CD14-positive monocyte (primary cell): ENCODE measurements at regions of chr21 and their contacts with region 1.

Region 1: DNA sequence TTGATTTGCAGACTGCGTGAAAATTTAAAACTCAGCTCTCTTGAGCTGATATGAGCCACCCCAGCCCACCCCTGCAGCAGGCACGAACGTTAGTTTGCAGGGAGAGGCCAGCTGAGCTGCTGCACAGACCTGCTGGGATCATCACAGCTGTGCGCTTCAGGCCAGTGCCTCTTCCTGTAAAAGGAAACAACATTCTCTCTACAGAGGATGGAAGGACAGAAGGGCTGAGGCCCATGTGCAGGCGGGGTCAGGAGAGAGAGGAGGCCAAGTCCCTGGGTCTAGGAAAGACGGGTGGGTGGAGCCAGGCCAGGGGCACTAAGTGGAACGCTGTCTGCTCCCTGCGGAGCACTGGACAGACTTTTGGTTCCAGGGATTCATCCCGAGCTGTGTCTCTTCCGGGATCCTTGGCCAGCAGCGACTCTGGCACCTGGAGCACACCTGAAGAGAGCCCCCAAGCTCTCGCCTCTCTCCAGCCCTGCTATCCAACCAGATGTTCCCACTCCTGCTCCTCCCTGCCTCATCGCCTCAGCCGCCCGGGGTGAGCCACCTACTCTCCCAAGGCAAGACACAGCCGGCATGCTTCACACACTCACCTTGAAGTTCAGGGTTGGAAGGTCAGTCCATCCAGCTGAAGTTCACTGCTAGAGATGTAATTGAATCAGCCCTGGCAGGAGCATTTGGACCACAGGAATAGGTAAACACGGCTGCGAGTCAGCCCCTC is 42.4 kb downstream of the RSPH1 start:
- DNase-seq: no peak
- H3K4me3 ChIP-seq: no peak overlapping the region
- H3K4me3 Mint-ChIP-seq: peak overlapping the region in 1 of 2 donors; percentile 24
- H3K27ac ChIP-seq: no peak overlapping the region
- H3K27ac Mint-ChIP-seq: no peak overlapping the region
- H3K4me1 ChIP-seq: peaks cover 6 to 8% of the 10 kb centered on the region in 2 donors
- H3K4me1 Mint-ChIP-seq: peaks cover 7% of the 10 kb centered on the region
- H3K27me3 ChIP-seq: no peaks in the 10 kb centered on the region
- H3K27me3 Mint-ChIP-seq: peaks cover 0 to 9% (median 5%) of the 10 kb centered on the region in 3 donors
- CTCF ChIP-seq: no peak

Region 2: DNA sequence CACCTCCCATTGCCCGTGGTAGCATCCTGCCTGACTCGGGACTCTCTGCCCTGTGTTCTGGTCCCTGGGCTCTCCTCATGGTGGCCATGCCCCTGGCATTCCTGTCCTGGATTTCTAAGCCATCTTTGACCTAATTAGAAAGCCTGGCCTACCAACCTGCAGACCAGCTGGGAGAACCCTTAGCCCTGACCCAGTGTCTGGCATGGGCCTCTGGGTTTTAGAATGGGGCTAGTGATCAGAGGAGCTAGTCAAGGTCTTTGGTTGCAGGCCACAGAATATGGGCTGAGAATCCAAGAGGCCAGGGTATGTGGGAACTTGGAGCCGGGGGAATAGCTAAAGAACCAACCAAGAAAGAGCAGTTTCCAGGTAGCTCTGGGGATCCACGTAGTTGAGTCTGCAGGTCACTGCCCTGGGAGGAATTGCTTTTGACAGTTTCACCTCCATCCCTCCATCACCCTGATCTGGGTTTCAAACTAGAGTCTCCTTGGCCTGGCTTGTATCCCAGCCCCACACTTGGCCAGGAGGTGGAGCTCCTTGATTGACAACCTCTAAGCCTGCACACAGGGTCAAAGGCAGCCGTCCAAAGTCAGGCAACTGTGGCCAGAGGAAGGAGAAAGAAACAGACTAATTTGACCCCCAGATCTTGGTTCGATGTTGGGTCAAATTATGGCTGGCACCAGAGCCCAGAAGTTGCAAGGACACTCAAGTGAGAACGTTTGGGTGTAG is 289.4 kb before region 1 on chr21:
- intact Hi-C with region 1: loop called in 1 of 2 experiments (anchors 5 kb)
- DNase-seq: peak; percentile 64 to 71 (median 67)
- H3K4me3 ChIP-seq: no peak overlapping the region
- H3K4me3 Mint-ChIP-seq: peak overlapping the region in 1 of 2 donors; percentile 48
- H3K27ac ChIP-seq: no peak overlapping the region
- H3K27ac Mint-ChIP-seq: peak overlapping the region in 2 of 7 donors; percentile 60 to 80
- H3K4me1 ChIP-seq: no peaks in the 10 kb centered on the region
- H3K4me1 Mint-ChIP-seq: peaks cover 12% of the 10 kb centered on the region
- H3K27me3 ChIP-seq: peaks cover 0 to 6% of the 10 kb centered on the region in 2 donors
- H3K27me3 Mint-ChIP-seq: peaks cover 5 to 11% (median 8%) of the 10 kb centered on the region in 3 donors
- CTCF ChIP-seq: peak; percentile 73

Region 3: GRCh38 chr21:42337830-42338728 is 115.6 kb before region 1 on chr21:
- intact Hi-C with region 1: loop called (anchors 1 to 5 kb)
- DNase-seq: peak; percentile 63 to 82 (median 70)
- H3K4me3 ChIP-seq: no peak overlapping the region
- H3K4me3 Mint-ChIP-seq: peak overlapping the region in 1 of 2 donors; percentile 7
- H3K27ac ChIP-seq: no peak overlapping the region
- H3K27ac Mint-ChIP-seq: peak overlapping the region in 1 of 7 donors; percentile 78
- H3K4me1 ChIP-seq: peaks cover 6 to 7% of the 10 kb centered on the region in 2 donors
- H3K4me1 Mint-ChIP-seq: peaks cover 9% of the 10 kb centered on the region
- H3K27me3 ChIP-seq: peaks cover 0 to 5% of the 10 kb centered on the region in 2 donors
- H3K27me3 Mint-ChIP-seq: peaks cover 2 to 6% (median 4%) of the 10 kb centered on the region in 3 donors
- CTCF ChIP-seq: peak; percentile 82

Region 4: DNA sequence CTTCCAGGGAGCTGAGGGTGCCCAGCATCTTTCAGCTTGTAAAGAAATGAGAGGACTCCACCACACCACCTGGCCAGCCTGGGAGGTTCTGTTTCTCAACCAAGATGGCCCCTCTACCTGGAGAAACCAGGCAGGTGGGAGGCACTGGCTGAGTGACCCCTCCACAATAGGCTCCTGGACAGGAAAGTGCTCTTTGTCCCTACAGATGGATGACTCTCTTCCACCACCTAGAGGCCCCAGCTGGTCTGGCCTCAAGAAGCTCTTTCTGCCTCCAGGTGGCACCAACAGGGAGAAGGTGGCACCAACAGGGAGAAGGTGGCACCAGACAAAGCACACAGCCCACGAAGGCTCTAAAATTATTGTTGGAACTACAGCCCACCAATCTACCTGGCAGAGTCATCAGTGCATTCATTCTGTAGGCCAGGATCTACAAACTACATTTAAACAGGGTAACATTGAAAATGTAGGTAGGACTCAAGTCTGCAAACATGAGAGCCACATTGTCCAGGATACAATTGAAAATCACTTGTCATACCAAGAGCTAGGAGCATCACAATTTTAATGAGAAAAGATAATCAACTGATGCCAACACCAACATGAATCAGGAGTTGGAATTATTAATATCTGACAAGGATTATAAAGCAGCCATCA is 72.2 kb before region 1 on chr21:
- intact Hi-C with region 1: loop called in 1 of 2 experiments (anchors 5 kb)
- DNase-seq: peak; percentile 10 to 15 (median 14)
- H3K4me3 ChIP-seq: no peak overlapping the region
- H3K4me3 Mint-ChIP-seq: no peak overlapping the region
- H3K27ac ChIP-seq: no peak overlapping the region
- H3K27ac Mint-ChIP-seq: no peak overlapping the region
- H3K4me1 ChIP-seq: peaks cover 9 to 21% of the 10 kb centered on the region in 2 donors
- H3K4me1 Mint-ChIP-seq: peaks cover 39% of the 10 kb centered on the region
- H3K27me3 ChIP-seq: no peaks in the 10 kb centered on the region
- H3K27me3 Mint-ChIP-seq: peaks cover 1 to 2% (median 2%) of the 10 kb centered on the region in 3 donors
- CTCF ChIP-seq: peak; percentile 56